Activated CD4-positive, alpha-beta T cell treated with anti-CD3 and anti-CD28 coated beads for 36 hours (primary cell): ENCODE measurements at regions of chr5 and their contacts with region 1.

Region 1: DNA sequence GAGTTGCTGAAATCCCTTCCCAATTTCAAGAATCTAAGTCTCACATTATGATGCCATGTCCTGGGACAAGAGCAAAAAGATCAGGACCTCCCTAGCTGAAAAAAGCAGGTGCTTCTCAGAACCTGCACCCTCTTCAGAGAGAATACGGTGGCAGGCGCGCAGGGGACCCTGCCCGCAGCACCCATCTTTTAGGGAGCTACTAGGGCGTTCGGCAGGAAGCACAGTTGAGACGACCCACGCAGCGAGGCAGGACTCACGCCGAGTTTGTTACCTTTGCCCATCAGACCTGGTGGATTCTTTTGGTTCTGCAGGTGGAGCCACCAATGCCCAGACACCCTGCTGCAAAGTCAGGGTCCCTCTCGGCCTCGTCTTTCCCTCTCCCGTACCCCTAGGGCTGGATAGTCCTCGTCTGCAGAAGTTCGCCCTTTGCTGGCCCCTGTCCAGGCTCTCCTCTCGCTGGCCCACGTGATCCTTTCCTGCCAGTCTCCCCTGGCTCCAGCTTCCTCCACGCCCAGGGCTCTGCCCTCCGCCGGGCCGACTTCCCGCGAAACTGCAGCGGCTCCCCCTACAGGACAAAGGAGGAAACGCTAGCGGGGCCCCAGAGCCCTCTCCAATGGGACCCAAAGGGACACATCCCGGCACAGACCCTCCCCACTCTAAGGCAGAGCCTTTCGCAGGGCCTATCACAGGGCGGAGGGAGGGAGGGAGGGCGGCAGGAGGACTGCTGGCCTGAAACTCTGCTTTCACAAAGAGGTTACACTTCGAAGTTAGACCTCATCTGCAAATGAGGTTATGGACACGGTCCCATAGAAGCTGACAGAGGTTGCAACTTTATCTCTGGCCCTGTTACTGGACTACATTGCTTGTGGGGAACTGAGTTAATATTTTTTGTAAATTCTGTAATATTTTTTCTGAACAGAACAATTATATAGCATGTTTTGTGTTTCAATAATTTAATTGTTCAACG is 28.8 kb downstream of the TMEM174 start:
- DNase-seq: peak; percentile 85
- ATAC-seq: peak; percentile 96
- H3K4me3 Mint-ChIP-seq: no peak overlapping the region
- H3K27ac Mint-ChIP-seq: no peak overlapping the region
- H3K4me1 Mint-ChIP-seq: peaks cover 3% of the 10 kb centered on the region
- H3K27me3 Mint-ChIP-seq: peaks cover 69% of the 10 kb centered on the region

Region 2: DNA sequence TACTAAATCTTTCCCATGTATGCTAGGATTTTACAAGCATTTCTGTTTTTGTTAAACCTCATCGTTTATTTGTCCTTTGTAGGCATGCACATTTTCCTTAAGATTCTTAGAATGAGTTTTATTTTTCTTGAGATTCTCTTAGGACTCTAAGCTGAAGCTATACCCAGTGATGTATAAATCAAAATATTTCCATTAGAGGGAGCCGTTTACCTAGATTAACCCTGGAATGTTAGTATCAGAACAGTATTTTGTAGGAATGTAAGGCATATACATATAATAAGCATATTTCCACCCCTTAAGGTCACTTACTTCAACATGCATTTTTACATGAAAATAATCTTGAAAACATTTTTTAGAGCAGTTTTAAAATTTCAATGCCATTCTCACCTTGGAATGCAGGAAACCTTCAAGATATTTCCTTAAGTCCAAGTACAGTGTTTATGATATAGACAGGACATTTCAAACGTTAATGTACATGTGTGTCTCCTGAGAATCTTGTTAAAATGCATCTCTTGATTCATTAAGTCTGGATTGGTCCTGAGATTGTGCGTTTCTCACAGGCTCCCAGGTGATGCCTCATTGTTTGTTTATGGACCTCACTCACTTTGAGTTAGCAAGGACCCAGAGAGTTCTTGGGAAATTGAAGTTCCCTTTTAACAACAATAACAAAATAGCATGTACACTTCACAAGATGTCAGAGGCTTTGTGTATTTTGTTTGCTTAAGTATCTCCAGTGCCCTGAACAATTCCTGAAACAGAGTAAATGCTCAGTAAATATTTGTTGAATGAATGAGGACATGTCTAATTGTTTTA is 280.9 kb before region 1 on chr5:
- CTCF ChIA-PET with region 1: no interaction called
- POLR2A ChIA-PET with region 1: no interaction called
- intact Hi-C with region 1: loop called in 1 of 2 experiments (anchors 5 kb)
- DNase-seq: no peak
- ATAC-seq: no peak
- H3K4me3 Mint-ChIP-seq: no peak overlapping the region
- H3K27ac Mint-ChIP-seq: no peak overlapping the region
- H3K4me1 Mint-ChIP-seq: no peaks in the 10 kb centered on the region
- H3K27me3 Mint-ChIP-seq: no peaks in the 10 kb centered on the region

Region 3: DNA sequence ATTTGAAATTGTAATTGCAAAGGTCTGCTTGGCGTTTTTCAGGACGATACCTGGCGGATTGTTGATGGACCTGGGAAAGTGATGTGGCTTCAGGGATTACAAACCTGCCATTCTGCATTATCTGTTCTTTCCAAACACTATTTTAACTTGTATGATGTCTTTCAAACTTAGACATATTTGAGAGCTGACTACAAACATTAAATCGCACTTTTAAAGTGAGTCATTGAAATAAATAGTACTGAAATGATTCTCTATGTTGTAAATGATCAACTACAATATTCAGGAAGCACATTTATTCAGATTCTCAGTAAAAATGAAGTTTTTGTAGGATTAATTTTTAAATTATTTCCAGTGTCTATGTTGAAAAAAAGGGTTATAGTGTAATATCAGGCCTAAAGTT is 113.8 kb before region 1 on chr5:
- CTCF ChIA-PET with region 1: interaction called, 7 read pairs
- POLR2A ChIA-PET with region 1: no interaction called
- intact Hi-C with region 1: loop called (anchors 1 kb)
- DNase-seq: no peak
- ATAC-seq: no peak
- H3K4me3 Mint-ChIP-seq: no peak overlapping the region
- H3K27ac Mint-ChIP-seq: no peak overlapping the region
- H3K4me1 Mint-ChIP-seq: no peaks in the 10 kb centered on the region
- H3K27me3 Mint-ChIP-seq: peaks cover 11% of the 10 kb centered on the region

Region 4: GRCh38 chr5:73170522-73170921 is 31.3 kb before region 1 on chr5:
- CTCF ChIA-PET with region 1: interaction called, 14 read pairs
- POLR2A ChIA-PET with region 1: no interaction called
- intact Hi-C with region 1: no loop called
- DNase-seq: peak; percentile 43
- ATAC-seq: peak; percentile 57
- H3K4me3 Mint-ChIP-seq: no peak overlapping the region
- H3K27ac Mint-ChIP-seq: no peak overlapping the region
- H3K4me1 Mint-ChIP-seq: no peaks in the 10 kb centered on the region
- H3K27me3 Mint-ChIP-seq: peaks cover 88% of the 10 kb centered on the region

Region 5: GRCh38 chr5:73189871-73190376 is 11.9 kb before region 1 on chr5:
- CTCF ChIA-PET with region 1: interaction called, 11 read pairs
- POLR2A ChIA-PET with region 1: no interaction called
- intact Hi-C with region 1: no loop called
- DNase-seq: no peak
- ATAC-seq: no peak
- H3K4me3 Mint-ChIP-seq: no peak overlapping the region
- H3K27ac Mint-ChIP-seq: no peak overlapping the region
- H3K4me1 Mint-ChIP-seq: no peaks in the 10 kb centered on the region
- H3K27me3 Mint-ChIP-seq: peaks cover 45% of the 10 kb centered on the region

Region 6: GRCh38 chr5:73215891-73216610 is 14.2 kb after region 1 on chr5:
- CTCF ChIA-PET with region 1: interaction called, 28 read pairs
- POLR2A ChIA-PET with region 1: no interaction called
- intact Hi-C with region 1: no loop called
- DNase-seq: peak; percentile 84
- ATAC-seq: peak; percentile 82
- H3K4me3 Mint-ChIP-seq: no peak overlapping the region
- H3K27ac Mint-ChIP-seq: no peak overlapping the region
- H3K4me1 Mint-ChIP-seq: peaks cover 14% of the 10 kb centered on the region
- H3K27me3 Mint-ChIP-seq: peaks cover 76% of the 10 kb centered on the region